Sigmoid colon (tissue), 7 donors: ENCODE measurements at regions of chr15 and their contacts with region 1.

Region 1: DNA sequence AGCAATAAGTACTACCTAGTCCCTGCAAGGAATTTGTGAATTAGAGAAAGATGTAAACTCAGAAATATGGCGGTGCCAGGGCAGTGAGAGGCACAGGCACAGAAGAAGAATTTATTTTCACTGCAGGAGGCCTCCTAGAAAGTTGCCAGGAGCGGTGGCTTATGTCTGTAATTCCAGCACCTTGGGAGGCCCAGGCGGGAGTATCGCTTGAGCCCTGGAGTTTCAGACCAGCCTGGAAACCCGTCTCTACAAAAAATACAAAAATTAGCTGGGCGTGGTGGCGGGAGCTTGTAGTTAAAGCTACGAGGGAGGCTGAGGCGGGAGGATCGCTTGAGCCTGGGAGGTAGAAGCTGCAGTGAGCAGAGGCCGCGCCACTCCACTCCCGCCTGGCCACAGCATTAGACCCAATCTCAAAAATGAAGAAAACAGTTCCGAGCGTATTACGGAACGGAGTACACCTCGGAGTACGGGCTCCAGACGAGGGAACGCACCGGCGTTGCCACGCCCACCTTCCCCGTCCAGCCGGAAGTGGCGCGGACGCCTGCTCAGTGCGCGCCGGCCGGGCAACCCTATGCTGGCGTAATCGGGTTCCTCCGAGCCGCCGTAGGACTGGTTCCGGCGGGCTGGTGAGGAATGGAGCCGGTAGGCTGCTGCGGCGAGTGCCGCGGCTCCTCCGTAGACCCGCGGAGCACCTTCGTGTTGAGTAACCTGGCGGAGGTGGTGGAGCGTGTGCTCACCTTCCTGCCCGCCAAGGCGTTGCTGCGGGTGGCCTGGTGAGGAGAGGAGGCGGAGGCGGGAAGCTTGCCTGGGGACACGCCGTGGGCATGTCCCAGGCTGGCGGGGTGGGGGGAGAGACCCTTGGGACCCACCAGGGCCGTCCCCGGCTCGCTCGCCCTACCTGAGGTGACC is at the start of gene FBXO22:
- DNase-seq: peak; percentile 93
- H3K4me3 ChIP-seq: peak within 1 kb of the TSS; percentile 77 to 98 (median 88)
- H3K27ac ChIP-seq: peak within 1 kb of the TSS; percentile 80 to 88 (median 84)
- H3K4me1 ChIP-seq: peaks cover 0 to 25% (median 15%) of the 10 kb centered on the region in 4 donors
- H3K27me3 ChIP-seq: no peaks in the 10 kb centered on the region
- CTCF ChIP-seq: no peak
- EP300 ChIP-seq: no peak
- POLR2A ChIP-seq: peak; percentile 58 to 67
- total RNA-seq, gene FBXO22: 12.2 to 18.6 (median 14.9) TPM

Region 2: DNA sequence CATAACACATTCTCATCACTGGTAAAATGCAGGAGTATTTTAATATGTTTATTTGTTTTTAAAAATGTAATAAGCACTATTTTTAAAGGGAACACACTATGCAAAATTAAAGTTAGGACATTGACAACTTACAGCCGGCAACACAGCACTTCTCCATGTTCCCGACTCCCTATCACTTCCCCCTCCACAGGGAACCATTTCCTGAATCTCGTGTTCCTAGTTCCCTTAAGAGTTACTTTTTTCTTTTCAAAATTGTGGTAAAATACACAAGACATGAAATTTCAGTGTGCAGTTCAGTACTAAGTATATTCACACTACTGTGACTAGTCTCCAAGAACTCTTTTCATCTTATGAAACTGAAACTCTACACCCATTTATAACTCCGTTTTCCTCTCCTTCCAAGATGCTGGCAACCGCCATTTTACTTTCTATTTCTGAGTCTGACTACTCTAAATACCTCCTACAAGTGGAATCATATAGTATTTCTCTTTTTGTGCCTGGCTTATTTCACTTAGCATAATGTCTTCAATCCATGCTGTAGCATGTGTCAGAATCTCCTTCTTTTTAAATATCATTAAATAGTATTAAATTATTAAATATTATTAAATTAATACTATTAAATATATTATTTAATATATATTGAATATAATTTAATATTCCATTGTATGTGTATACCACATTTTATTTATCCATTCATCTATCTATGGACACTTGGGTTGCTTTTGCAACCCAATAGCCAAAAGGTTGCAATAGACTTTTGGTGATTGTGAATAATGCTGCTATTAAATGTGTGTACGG is 86.2 kb before region 1 on chr15:
- intact Hi-C with region 1: no loop called
- DNase-seq: no peak
- H3K4me3 ChIP-seq: peak overlapping the region in 3 of 4 donors; percentile 4 to 26 (median 25)
- H3K27ac ChIP-seq: no peak overlapping the region
- H3K4me1 ChIP-seq: peaks cover 0 to 4% (median 0%) of the 10 kb centered on the region in 4 donors
- H3K27me3 ChIP-seq: no peaks in the 10 kb centered on the region
- CTCF ChIP-seq: no peak
- EP300 ChIP-seq: no peak
- POLR2A ChIP-seq: no peak

Region 3: DNA sequence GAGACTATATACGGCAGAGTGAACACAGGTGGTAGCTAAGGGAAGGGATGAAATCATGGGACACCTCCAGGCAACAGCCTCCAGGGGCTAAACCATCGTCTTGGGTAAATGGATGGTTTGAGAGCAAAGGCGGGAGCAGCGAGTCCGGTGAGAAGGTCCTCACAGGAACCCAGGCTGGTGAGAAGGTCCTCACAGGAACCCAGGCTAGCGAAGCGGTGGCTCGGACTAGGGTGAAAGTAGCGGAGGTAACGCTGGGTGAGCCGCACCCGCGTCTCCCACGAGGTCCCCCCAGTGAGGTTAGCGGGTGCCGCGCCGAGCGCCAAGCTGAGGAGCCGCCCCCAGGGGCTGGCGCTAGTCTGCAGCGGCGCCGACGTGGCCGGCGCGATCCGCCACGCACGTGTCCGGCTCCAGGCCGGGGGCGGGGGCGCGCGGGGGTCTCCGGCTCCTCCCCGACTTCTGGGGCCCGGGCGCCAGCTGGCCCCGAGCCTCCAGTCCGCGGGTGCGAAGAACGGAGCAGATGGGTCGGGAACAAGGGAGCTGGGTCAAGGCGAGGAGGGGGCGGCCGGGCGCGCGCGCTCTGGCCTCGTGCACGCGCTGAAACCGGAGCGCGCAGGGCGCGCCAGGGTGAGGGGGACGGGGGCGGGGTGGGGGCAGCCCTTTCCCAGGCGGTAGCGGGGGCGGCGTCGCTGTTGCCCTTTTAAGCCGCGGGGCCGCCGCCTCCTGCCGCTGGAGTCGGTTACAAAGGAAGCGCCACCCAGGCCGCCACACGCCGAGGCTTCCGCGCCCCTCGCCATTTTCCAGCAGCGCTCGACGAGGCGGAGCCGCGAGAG is 60.6 kb before region 1 on chr15 and contains the start of gene UBE2Q2:
- intact Hi-C with region 1: loop called (anchors 5 kb)
- DNase-seq: peak; percentile 86
- H3K4me3 ChIP-seq: peak within 1 kb of the TSS; percentile 76 to 93 (median 88)
- H3K27ac ChIP-seq: peak within 1 kb of the TSS; percentile 90 to 97 (median 96)
- H3K4me1 ChIP-seq: peaks cover 0 to 56% (median 38%) of the 10 kb centered on the region in 4 donors
- H3K27me3 ChIP-seq: no peaks in the 10 kb centered on the region
- CTCF ChIP-seq: no peak
- EP300 ChIP-seq: no peak
- POLR2A ChIP-seq: no peak
- total RNA-seq, gene UBE2Q2: 69.5 to 101 (median 97.9) TPM

Region 4: DNA sequence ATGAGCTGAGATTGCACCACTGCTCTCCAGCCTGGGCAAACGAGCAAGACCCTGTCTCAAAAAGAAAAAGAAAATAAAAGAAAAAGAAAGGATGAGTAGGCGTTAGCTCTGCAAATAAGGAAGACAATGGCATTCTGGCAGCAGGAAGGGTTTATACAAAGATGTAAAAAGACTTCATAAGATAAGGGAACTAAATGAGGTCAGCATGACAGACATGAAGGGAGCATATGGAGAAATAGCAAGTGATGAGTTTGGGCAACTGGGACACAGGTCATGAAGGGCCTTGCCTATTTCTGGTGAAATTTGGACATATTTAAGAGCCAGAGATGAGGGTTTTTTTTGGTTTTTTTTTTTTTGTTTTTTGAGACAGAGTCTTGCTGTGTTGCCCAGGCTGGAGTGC is 180.7 kb after region 1 on chr15:
- intact Hi-C with region 1: no loop called
- DNase-seq: no peak
- H3K4me3 ChIP-seq: no peak overlapping the region
- H3K27ac ChIP-seq: no peak overlapping the region
- H3K4me1 ChIP-seq: no peaks in the 10 kb centered on the region
- H3K27me3 ChIP-seq: peaks cover 0 to 3% (median 0%) of the 10 kb centered on the region in 3 donors
- CTCF ChIP-seq: no peak
- EP300 ChIP-seq: no peak
- POLR2A ChIP-seq: no peak